ENCODE measurements at regions of chr7 and their contacts with region 1.

Region 1: DNA sequence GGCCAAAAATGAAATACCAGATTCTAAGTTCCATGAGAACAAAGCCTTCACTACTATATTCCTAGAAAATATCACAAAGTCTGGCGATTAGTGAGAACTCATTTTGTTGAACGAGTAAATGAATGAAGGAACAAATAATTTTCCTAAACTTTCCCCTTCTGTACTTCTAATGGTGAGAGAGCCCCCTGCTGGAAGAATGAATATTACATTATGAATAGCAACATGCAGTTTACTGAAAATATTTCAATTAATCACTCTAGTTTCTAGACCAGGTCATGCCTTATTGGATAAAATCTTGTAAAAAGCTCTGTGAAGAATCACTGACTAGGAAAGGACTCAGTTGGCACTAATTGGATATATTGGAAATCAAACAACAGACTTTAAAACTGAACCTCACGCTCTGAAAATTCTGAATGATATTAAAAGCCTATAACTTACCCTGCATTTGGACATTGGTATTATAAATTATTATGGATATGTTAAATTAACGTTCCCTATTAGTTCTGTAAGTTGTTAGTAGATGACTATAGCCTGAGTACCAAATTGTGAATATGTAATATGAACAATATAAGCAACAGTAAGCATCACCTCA is 32.4 kb upstream of the MTPN start:
- DNase-seq: no peak
- H3K4me3 ChIP-seq: no peak overlapping the region
- H3K27ac ChIP-seq: no peak overlapping the region
- H3K4me1 ChIP-seq: peaks cover 0 to 8% (median 0%) of the 10 kb centered on the region in 6 donors
- H3K27me3 ChIP-seq: peaks cover 0 to 7% (median 0%) of the 10 kb centered on the region in 7 donors
- CTCF ChIP-seq: peak; percentile 38 to 79 (median 72)
- POLR2A ChIP-seq: no peak

Region 2: GRCh38 chr7:135672560-135673359 is 336.8 kb before region 1 on chr7:
- intact Hi-C with region 1: loop called (anchors 10 kb)
- DNase-seq: no peak
- H3K4me3 ChIP-seq: no peak overlapping the region
- H3K27ac ChIP-seq: peak overlapping the region in 5 of 8 donors; percentile 13 to 39 (median 35)
- H3K4me1 ChIP-seq: peaks cover 0 to 48% (median 8%) of the 10 kb centered on the region in 6 donors
- H3K27me3 ChIP-seq: no peaks in the 10 kb centered on the region
- CTCF ChIP-seq: peak in 10 of 11 experiments; percentile 22 to 71 (median 59)
- POLR2A ChIP-seq: no peak

Region 3: GRCh38 chr7:135801877-135802276 is 207.7 kb before region 1 on chr7:
- intact Hi-C with region 1: loop called (anchors 2 kb)
- DNase-seq: no peak
- H3K4me3 ChIP-seq: no peak overlapping the region
- H3K27ac ChIP-seq: no peak overlapping the region
- H3K4me1 ChIP-seq: peaks cover 3 to 11% (median 7%) of the 10 kb centered on the region in 6 donors
- H3K27me3 ChIP-seq: peaks cover 0 to 20% (median 0%) of the 10 kb centered on the region in 7 donors
- CTCF ChIP-seq: no peak
- POLR2A ChIP-seq: no peak

Measured in spleen (tissue), 13 donors.